ENCODE measurements at regions of chr9 and their contacts with region 1.

Region 1: DNA sequence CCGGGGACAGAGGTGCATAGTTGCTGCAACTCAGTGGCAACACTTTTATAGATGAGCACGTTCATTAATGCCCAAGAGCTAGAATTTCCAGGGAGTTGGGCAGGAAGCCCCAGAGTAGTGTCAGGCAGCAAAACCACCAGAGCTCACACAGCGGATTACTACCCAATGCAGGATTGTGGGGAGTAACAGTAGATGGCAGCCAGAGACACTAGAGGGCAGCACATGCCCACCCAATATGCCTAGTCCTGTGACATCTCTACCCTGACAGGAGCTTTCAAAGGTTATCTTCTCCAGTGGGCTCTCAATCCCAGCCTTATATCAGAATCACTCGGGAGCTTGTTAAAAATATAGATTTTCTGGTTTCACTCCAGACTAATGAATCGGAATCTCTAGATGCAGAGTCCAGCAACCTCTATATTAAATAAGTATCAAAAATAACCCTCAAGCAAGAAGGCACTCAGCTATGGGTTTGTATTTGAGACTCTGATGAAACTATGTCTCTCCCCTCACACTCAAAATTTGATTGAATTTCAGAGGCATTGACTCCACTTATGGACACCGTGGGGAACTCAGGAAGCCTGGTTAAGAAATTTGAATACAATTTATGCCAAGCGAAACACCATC is 58.4 kb upstream of the PHF24 start:
- DNase-seq: peak; percentile 71
- H3K4me3 Mint-ChIP-seq: no peak overlapping the region
- H3K27ac Mint-ChIP-seq: no peak overlapping the region
- H3K4me1 Mint-ChIP-seq: no peaks in the 10 kb centered on the region
- H3K27me3 Mint-ChIP-seq: peaks cover 52% of the 10 kb centered on the region
- CTCF ChIP-seq: peak; percentile 57

Region 2: DNA sequence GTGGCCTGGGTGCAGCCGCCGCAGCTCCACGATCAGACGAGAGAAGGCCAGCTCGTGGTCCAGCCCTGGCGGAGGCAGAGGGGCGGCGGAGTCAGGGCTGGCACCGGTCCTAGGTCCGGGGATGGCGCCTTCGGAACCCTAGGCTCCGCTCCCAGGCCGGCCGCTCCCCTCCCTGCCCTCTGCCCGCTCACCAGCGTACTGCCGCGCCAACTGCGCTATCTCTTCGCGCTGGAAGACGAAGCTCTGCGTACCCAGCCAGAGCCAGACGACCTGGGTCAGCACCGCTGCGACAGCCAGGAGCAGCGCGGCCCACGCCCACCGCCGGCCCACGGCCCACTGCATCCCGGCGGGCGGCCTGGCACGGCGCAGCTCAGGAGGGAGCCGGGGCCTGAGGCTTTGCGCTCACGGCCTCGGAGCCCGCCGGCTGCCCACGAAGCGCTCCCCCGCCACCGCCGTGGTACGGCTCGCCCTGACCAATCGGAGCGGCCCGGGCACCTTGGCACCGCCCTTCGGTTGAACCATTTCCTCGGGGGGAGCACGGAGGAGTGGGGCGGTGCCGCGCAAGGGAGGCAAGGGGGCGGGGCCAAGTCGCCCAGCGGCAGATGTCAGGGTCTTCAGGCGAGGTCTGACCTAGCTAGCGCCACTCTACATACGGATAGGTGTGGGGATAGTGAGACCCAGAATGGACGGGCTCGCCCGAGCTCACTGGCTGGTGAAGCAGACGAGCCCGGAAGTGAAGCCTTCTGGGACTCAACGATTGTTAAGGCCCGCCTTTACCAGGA is 262.1 kb before region 1 on chr9 and contains the start of gene SIGMAR1:
- CTCF ChIA-PET with region 1: no interaction called
- intact Hi-C with region 1: no loop called
- DNase-seq: peak; percentile 91
- H3K4me3 Mint-ChIP-seq: peak within 1 kb of the TSS; percentile 83
- H3K27ac Mint-ChIP-seq: peak within 1 kb of the TSS; percentile 56
- H3K4me1 Mint-ChIP-seq: peaks cover 10% of the 10 kb centered on the region
- H3K27me3 Mint-ChIP-seq: no peaks in the 10 kb centered on the region
- CTCF ChIP-seq: no peak
- total RNA-seq, gene SIGMAR1: 65.6 and 80.1 TPM in 2 replicates

Region 3: GRCh38 chr9:34961574-34962490 is 62.2 kb after region 1 on chr9:
- CTCF ChIA-PET with region 1: interaction called, 10 read pairs
- intact Hi-C with region 1: no loop called
- DNase-seq: peak; percentile 31
- H3K4me3 Mint-ChIP-seq: no peak overlapping the region
- H3K27ac Mint-ChIP-seq: no peak overlapping the region
- H3K4me1 Mint-ChIP-seq: peaks cover 21% of the 10 kb centered on the region
- H3K27me3 Mint-ChIP-seq: peaks cover 56% of the 10 kb centered on the region
- CTCF ChIP-seq: no peak

Region 4: GRCh38 chr9:34989003-34989945 is 89.6 kb after region 1 on chr9 and contains the start of gene DNAJB5:
- CTCF ChIA-PET with region 1: interaction called, 27 read pairs
- intact Hi-C with region 1: loop called (anchors 1 kb)
- DNase-seq: peak; percentile 94
- H3K4me3 Mint-ChIP-seq: peak within 1 kb of the TSS; percentile 71
- H3K27ac Mint-ChIP-seq: peak within 1 kb of the TSS; percentile 97
- H3K4me1 Mint-ChIP-seq: peaks cover 31% of the 10 kb centered on the region
- H3K27me3 Mint-ChIP-seq: peaks cover 47% of the 10 kb centered on the region
- CTCF ChIP-seq: no peak
- total RNA-seq, gene DNAJB5: 1.5 and 3.1 TPM in 2 replicates

Region 5: GRCh38 chr9:34994260-34994899 is 94.7 kb after region 1 on chr9:
- CTCF ChIA-PET with region 1: interaction called, 27 read pairs
- intact Hi-C with region 1: no loop called
- DNase-seq: peak; percentile 39
- H3K4me3 Mint-ChIP-seq: no peak overlapping the region
- H3K27ac Mint-ChIP-seq: peak overlapping the region; percentile 51
- H3K4me1 Mint-ChIP-seq: peaks cover 8% of the 10 kb centered on the region
- H3K27me3 Mint-ChIP-seq: peaks cover 6% of the 10 kb centered on the region
- CTCF ChIP-seq: peak; percentile 44

Region 6: DNA sequence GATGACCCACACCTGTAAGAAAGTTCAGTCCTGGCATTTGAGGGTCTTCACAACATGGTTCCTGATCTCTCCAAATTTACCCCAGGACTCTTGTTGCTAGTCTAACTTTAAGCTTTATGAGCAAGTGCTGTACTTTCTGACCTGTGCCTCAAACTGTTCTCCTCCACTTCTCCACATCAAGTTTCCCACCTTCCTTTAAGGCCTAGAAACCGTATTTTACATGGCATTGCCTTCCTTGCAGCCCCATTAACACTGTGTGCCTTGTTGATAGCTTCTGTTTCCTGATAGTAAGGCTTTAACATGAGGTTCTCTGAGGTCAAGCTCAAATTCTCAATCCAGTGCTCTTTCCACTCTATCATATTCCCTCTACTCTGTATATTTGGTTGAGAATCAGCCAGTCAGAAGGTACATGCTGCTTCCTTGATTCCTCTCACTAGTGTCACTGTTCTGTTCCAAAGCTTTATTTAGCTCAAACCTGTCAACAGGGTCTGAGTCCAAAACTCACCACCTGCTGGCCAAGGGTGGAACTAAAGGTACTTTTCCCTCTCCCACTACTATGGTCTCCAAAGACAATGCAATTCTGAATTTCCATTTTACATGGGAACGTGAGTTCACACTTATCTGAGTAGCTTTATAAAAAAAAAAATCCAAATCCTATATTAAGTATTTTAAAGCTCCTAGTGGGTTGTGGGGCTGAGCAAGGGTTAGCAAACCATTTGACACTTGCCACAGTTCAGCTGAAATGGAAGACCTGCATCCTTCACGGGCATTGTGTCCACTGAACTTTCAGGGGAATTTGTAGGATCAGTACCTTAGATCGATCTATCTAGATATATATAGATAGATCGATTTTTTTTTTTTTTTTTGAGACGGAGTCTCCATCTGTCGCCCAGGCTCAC is 151.7 kb after region 1 on chr9:
- CTCF ChIA-PET with region 1: interaction called, 17 read pairs
- intact Hi-C with region 1: no loop called
- DNase-seq: peak; percentile 46
- H3K4me3 Mint-ChIP-seq: no peak overlapping the region
- H3K27ac Mint-ChIP-seq: peak overlapping the region; percentile 0
- H3K4me1 Mint-ChIP-seq: no peaks in the 10 kb centered on the region
- H3K27me3 Mint-ChIP-seq: no peaks in the 10 kb centered on the region
- CTCF ChIP-seq: no peak

Region 7: GRCh38 chr9:35481347-35481975 is 581.8 kb after region 1 on chr9:
- CTCF ChIA-PET with region 1: no interaction called
- intact Hi-C with region 1: loop called (anchors 5 kb)
- DNase-seq: peak; percentile 64
- H3K4me3 Mint-ChIP-seq: no peak overlapping the region
- H3K27ac Mint-ChIP-seq: no peak overlapping the region
- H3K4me1 Mint-ChIP-seq: peaks cover 9% of the 10 kb centered on the region
- H3K27me3 Mint-ChIP-seq: no peaks in the 10 kb centered on the region
- CTCF ChIP-seq: peak; percentile 49

Measured in Calu3 (cell line).